ENCODE measurements at regions of chr11 and their contacts with region 1.

Region 1: DNA sequence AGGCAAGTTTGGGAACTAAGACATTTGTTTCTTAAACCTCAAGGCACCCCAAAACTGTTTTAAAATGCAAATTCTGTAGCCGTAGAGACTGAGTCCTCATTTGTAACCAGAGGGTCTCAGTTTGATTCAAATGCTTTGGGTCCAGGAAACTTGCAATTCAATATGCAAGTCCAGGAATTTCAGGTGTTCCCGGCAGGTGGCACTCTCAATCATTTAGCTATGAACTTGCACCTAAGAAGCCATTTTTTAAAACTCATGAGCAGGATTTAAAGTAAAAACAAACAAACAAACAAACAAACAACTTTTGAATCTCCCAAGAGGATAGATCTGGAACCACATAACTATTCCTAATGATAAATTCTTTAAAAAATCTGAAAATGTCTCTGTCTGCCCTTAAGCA is 8.7 kb upstream of the ABTB2 start:
- DNase-seq: no peak
- H3K4me3 ChIP-seq: no peak overlapping the region
- H3K27ac ChIP-seq: no peak overlapping the region
- H3K4me1 ChIP-seq: peaks cover 0 to 5% (median 2%) of the 10 kb centered on the region in 4 donors
- H3K27me3 ChIP-seq: peaks cover 0 to 7% (median 0%) of the 10 kb centered on the region in 4 donors
- CTCF ChIP-seq: no peak
- EP300 ChIP-seq: no peak
- POLR2A ChIP-seq: no peak

Region 2: GRCh38 chr11:34339149-34340064 is 27.1 kb before region 1 on chr11:
- intact Hi-C with region 1: no loop called
- DNase-seq: no peak
- H3K4me3 ChIP-seq: no peak overlapping the region
- H3K27ac ChIP-seq: no peak overlapping the region
- H3K4me1 ChIP-seq: peaks cover 21 to 37% (median 30%) of the 10 kb centered on the region in 4 donors
- H3K27me3 ChIP-seq: no peaks in the 10 kb centered on the region
- CTCF ChIP-seq: no peak
- EP300 ChIP-seq: no peak
- POLR2A ChIP-seq: no peak

Region 3: DNA sequence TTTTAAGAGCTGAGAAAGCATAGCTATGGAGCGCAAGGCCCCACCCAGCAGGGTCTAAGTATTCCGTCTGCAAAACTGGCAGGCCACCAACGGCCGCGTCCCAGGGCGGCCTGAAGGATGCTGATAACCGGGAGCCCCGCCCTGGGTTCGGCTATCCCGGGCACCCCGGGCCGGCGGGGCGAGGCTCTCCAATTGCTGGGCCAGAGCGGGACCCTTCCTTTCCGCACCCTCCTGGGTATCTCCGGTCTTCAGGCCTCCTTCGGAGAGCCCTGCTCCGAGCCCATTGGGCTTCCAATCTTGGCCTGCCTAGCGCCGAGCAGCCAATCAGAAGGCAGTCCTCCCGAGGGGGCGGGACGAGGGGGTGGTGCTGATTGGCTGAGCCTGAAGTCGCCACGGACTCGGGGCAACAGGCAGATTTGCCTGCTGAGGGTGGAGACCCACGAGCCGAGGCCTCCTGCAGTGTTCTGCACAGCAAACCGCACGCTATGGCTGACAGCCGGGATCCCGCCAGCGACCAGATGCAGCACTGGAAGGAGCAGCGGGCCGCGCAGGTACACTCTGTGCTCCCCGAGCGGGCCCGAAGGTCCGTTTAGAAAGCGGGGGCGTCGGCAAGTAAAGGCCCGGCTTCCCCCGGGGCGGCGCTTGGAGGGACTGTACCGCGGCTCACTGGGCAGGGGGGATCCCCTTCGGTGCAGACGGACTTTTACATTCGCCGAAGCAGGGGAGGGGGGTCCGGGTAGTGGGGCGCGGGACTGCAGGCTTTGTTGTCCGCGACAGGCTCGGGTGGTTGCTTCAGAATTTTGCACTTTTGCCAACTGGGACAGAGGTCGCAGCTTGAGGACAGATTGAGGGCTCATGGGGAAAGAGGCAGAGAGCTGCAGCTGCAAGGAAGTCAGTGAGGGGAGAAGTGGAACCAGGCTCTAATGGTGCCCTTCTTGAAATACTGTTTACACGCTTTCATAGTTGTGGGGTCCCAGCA is 72.3 kb after region 1 on chr11 and contains the start of gene CAT:
- intact Hi-C with region 1: loop called (anchors 5 kb)
- DNase-seq: peak; percentile 99
- H3K4me3 ChIP-seq: peak within 1 kb of the TSS; percentile 70 to 93 (median 82)
- H3K27ac ChIP-seq: peak within 1 kb of the TSS; percentile 80 to 95 (median 88)
- H3K4me1 ChIP-seq: peaks cover 26 to 43% (median 37%) of the 10 kb centered on the region in 4 donors
- H3K27me3 ChIP-seq: no peaks in the 10 kb centered on the region
- CTCF ChIP-seq: no peak
- EP300 ChIP-seq: no peak
- POLR2A ChIP-seq: peak; percentile 57
- total RNA-seq, gene CAT: 72.8 to 163 (median 84.4) TPM

Region 4: GRCh38 chr11:34492806-34493414 is 126.4 kb after region 1 on chr11:
- intact Hi-C with region 1: loop called (anchors 10 kb)
- DNase-seq: no peak
- H3K4me3 ChIP-seq: no peak overlapping the region
- H3K27ac ChIP-seq: no peak overlapping the region
- H3K4me1 ChIP-seq: no peaks in the 10 kb centered on the region
- H3K27me3 ChIP-seq: peaks cover 0 to 12% (median 4%) of the 10 kb centered on the region in 4 donors
- CTCF ChIP-seq: peak; percentile 44 to 66 (median 64)
- EP300 ChIP-seq: no peak
- POLR2A ChIP-seq: no peak